ENCODE measurements at regions of chr2 and their contacts with region 1.

Region 1: GRCh38 chr2:226791487-226792081 is 8.0 kb downstream of the IRS1 start:
- DNase-seq: peak; percentile 36 to 63
- H3K4me3 ChIP-seq: peak overlapping the region; percentile 24
- H3K4me3 Mint-ChIP-seq: peak overlapping the region; percentile 55
- H3K27ac Mint-ChIP-seq: peak overlapping the region; percentile 32
- H3K4me1 ChIP-seq: peaks cover 20% of the 10 kb centered on the region
- H3K4me1 Mint-ChIP-seq: peaks cover 13% of the 10 kb centered on the region
- H3K27me3 ChIP-seq: no peaks in the 10 kb centered on the region
- H3K27me3 Mint-ChIP-seq: no peaks in the 10 kb centered on the region
- CTCF ChIP-seq: no peak

Region 2: DNA sequence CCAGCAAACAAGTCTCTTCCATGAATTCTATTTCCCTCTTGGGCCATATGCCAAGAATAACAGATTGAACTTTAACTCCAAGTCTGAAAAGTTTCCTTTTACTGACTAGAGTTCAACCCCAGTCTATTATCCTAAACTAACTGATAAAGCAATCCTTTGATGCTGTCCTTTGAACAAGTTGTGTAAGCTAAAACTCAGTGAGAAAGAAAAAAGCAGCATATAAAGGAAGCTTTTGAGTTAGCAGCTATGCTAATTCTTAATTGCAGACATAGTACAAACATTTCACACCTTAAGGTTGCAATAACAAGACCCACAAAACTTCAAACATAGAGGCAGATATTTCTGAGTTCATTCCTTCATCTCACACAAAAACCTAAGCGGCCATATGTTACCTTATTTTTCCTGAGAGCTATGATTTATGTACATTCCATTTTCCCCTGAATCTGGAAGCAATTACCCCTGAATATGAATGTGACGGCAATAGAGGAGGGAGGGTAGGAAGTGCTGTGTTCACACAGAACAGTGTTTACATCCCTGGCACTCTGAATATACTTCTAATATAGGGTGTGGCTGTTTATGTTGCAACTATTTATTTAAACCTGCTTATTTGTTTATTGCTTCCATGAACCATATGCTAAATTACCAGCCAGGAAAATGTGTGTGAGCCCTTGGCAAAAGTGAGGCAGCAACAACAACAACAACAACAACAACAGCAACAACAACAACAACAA is 172.5 kb before region 1 on chr2:
- CTCF ChIA-PET with region 1: no interaction called
- POLR2A ChIA-PET with region 1: no interaction called
- intact Hi-C with region 1: loop called (anchors 10 kb)
- DNase-seq: peak in 1 of 2 experiments; percentile 1
- H3K4me3 ChIP-seq: no peak overlapping the region
- H3K4me3 Mint-ChIP-seq: peak overlapping the region; percentile 48
- H3K27ac Mint-ChIP-seq: no peak overlapping the region
- H3K4me1 ChIP-seq: peaks cover 18% of the 10 kb centered on the region
- H3K4me1 Mint-ChIP-seq: peaks cover 26% of the 10 kb centered on the region
- H3K27me3 ChIP-seq: no peaks in the 10 kb centered on the region
- H3K27me3 Mint-ChIP-seq: no peaks in the 10 kb centered on the region
- CTCF ChIP-seq: no peak

Region 3: GRCh38 chr2:226683196-226683595 is 108.4 kb before region 1 on chr2:
- CTCF ChIA-PET with region 1: no interaction called
- POLR2A ChIA-PET with region 1: no interaction called
- intact Hi-C with region 1: loop called (anchors 10 kb)
- DNase-seq: no peak
- H3K4me3 ChIP-seq: no peak overlapping the region
- H3K4me3 Mint-ChIP-seq: no peak overlapping the region
- H3K27ac Mint-ChIP-seq: no peak overlapping the region
- H3K4me1 ChIP-seq: peaks cover 15% of the 10 kb centered on the region
- H3K4me1 Mint-ChIP-seq: peaks cover 5% of the 10 kb centered on the region
- H3K27me3 ChIP-seq: no peaks in the 10 kb centered on the region
- H3K27me3 Mint-ChIP-seq: no peaks in the 10 kb centered on the region
- CTCF ChIP-seq: no peak

Region 4: DNA sequence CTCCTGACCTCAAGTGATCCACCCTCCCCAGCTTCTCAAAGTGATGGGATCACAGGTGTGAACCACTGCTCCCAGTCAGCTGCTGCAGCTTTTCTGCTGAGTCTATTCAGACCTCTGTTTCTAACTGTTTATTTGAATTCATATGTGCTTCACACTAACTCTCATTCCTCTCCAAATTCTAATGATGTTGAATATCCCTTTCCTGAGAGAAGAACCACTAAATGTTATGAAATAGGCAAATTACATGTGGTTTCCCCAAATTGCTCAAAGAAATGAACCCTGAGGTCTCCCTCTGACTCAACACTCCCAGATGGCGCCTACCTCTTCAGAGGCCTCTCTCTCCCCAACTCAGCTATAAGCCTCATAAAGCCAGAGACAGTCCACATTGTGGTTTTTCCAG is 90.5 kb before region 1 on chr2:
- CTCF ChIA-PET with region 1: no interaction called
- POLR2A ChIA-PET with region 1: no interaction called
- intact Hi-C with region 1: no loop called
- DNase-seq: no peak
- H3K4me3 ChIP-seq: no peak overlapping the region
- H3K4me3 Mint-ChIP-seq: no peak overlapping the region
- H3K27ac Mint-ChIP-seq: no peak overlapping the region
- H3K4me1 ChIP-seq: no peaks in the 10 kb centered on the region
- H3K4me1 Mint-ChIP-seq: no peaks in the 10 kb centered on the region
- H3K27me3 ChIP-seq: no peaks in the 10 kb centered on the region
- H3K27me3 Mint-ChIP-seq: no peaks in the 10 kb centered on the region
- CTCF ChIP-seq: no peak

Region 5: DNA sequence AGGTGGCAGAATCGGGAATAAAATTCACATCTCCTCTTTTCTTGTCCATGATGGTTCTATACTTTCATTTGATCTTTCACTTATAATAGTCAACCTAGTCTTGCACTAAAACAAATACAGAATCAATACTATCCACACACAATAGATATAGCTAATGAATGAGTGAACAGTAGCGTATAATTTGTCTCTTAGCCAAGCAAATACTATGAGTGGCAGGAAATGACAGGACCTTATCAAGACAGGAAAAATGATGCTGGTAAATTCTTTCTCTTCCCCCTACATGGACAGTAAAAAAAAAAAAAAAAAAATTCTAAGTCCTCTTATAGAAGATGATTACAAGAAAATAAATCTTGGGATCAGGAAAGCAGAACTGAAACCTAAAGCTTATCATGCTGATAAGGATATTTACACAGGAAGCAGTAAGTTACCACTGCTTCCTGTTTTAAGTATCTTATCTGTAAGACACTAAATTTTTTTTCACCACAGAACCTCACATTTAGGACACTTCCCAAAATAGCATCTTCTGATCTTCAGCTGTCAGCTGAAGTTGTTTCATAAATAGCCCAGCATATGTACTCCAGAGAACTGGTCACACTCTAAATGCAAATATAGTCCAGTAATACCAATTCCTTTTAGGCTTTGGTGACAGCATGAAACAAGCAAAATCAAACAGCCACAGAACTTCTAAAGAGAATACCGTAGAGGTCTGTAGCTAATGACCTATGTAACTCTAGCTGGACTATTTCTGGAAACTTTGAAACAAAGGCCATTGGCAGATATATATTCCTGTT is 19.0 kb before region 1 on chr2:
- CTCF ChIA-PET with region 1: no interaction called
- POLR2A ChIA-PET with region 1: no interaction called
- intact Hi-C with region 1: loop called (anchors 2 kb)
- DNase-seq: no peak
- H3K4me3 ChIP-seq: no peak overlapping the region
- H3K4me3 Mint-ChIP-seq: no peak overlapping the region
- H3K27ac Mint-ChIP-seq: no peak overlapping the region
- H3K4me1 ChIP-seq: peaks cover 36% of the 10 kb centered on the region
- H3K4me1 Mint-ChIP-seq: peaks cover 20% of the 10 kb centered on the region
- H3K27me3 ChIP-seq: no peaks in the 10 kb centered on the region
- H3K27me3 Mint-ChIP-seq: no peaks in the 10 kb centered on the region
- CTCF ChIP-seq: no peak

Region 6: GRCh38 chr2:226828191-226828590 is 36.6 kb after region 1 on chr2:
- CTCF ChIA-PET with region 1: no interaction called
- POLR2A ChIA-PET with region 1: no interaction called
- intact Hi-C with region 1: no loop called
- DNase-seq: no peak
- H3K4me3 ChIP-seq: no peak overlapping the region
- H3K4me3 Mint-ChIP-seq: no peak overlapping the region
- H3K27ac Mint-ChIP-seq: no peak overlapping the region
- H3K4me1 ChIP-seq: no peaks in the 10 kb centered on the region
- H3K4me1 Mint-ChIP-seq: no peaks in the 10 kb centered on the region
- H3K27me3 ChIP-seq: no peaks in the 10 kb centered on the region
- H3K27me3 Mint-ChIP-seq: no peaks in the 10 kb centered on the region
- CTCF ChIP-seq: no peak

Region 7: GRCh38 chr2:226845386-226846116 is 54.0 kb after region 1 on chr2:
- CTCF ChIA-PET with region 1: no interaction called
- POLR2A ChIA-PET with region 1: no interaction called
- intact Hi-C with region 1: no loop called
- DNase-seq: no peak
- H3K4me3 ChIP-seq: no peak overlapping the region
- H3K4me3 Mint-ChIP-seq: no peak overlapping the region
- H3K27ac Mint-ChIP-seq: no peak overlapping the region
- H3K4me1 ChIP-seq: no peaks in the 10 kb centered on the region
- H3K4me1 Mint-ChIP-seq: no peaks in the 10 kb centered on the region
- H3K27me3 ChIP-seq: no peaks in the 10 kb centered on the region
- H3K27me3 Mint-ChIP-seq: no peaks in the 10 kb centered on the region
- CTCF ChIP-seq: no peak

Measured in Caco-2 (cell line).